Breast epithelium (tissue), 4 donors: ENCODE measurements at regions of chr3 and their contacts with region 1.

Region 1: GRCh38 chr3:54951405-54951804 is 23.5 kb upstream of the LRTM1 start:
- DNase-seq: peak; percentile 47 to 54
- H3K4me3 ChIP-seq: no peak overlapping the region
- H3K27ac ChIP-seq: no peak overlapping the region
- H3K4me1 ChIP-seq: no peaks in the 10 kb centered on the region
- H3K27me3 ChIP-seq: no peaks in the 10 kb centered on the region
- CTCF ChIP-seq: peak in 2 of 3 donors; percentile 27 to 41
- POLR2A ChIP-seq: no peak

Region 2: DNA sequence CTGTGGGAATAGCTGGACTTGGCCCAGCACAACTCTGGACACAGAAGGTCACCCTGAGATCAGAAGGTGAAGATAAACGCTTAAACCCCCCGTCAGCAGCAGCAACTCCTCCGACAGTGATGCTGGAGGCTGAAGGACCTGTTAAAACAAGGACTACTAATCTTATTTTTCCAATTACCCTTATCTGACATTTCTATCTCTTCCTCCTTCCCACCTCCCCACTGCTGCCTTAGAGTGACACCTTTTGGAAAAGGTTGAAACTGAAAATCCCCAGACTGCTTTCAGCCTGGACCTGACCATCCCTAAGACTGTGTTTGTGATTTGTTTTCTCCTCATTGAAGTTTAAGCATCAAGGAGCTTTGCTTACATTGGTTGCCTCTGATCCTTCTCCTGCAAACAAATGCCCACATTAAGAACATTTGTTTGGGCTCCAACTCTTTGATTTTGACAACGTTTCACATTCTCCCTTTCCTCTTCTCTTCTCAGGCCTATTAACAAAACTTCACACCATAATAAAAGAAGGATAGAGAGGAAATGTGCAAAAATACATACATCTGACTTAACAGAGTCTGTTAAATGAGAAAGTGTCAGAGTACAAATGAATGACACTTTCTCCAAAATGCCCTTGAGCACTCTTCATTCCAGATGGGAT is 946.3 kb after region 1 on chr3:
- intact Hi-C with region 1: loop called (anchors 10 kb)
- DNase-seq: no peak
- H3K4me3 ChIP-seq: no peak overlapping the region
- H3K27ac ChIP-seq: no peak overlapping the region
- H3K4me1 ChIP-seq: no peaks in the 10 kb centered on the region
- H3K27me3 ChIP-seq: no peaks in the 10 kb centered on the region
- CTCF ChIP-seq: peak in 2 of 3 donors; percentile 42 to 46
- POLR2A ChIP-seq: no peak